Activated CD4-positive, alpha-beta T cell treated with anti-CD3 and anti-CD28 coated beads, Interleukin-2, amount 10 ng/mL, durations not matched to agents 24 days and 14 days (primary cell): ENCODE measurements at regions of chr1 and their contacts with region 1.

Region 1: GRCh38 chr1:167803358-167804207 is 81.8 kb downstream of the MPZL1 start:
- DNase-seq: peak; percentile 96
- H3K4me3 Mint-ChIP-seq: peak overlapping the region; percentile 68
- H3K27ac Mint-ChIP-seq: peak overlapping the region; percentile 87
- H3K4me1 Mint-ChIP-seq: peaks cover 26% of the 10 kb centered on the region
- H3K27me3 Mint-ChIP-seq: no peaks in the 10 kb centered on the region

Region 2: GRCh38 chr1:167599957-167600581 is 203.5 kb before region 1 on chr1:
- intact Hi-C with region 1: loop called (anchors 1 kb)
- DNase-seq: peak; percentile 85
- H3K4me3 Mint-ChIP-seq: peak overlapping the region; percentile 72
- H3K27ac Mint-ChIP-seq: peak overlapping the region; percentile 85
- H3K4me1 Mint-ChIP-seq: peaks cover 40% of the 10 kb centered on the region
- H3K27me3 Mint-ChIP-seq: peaks cover 4% of the 10 kb centered on the region

Region 3: DNA sequence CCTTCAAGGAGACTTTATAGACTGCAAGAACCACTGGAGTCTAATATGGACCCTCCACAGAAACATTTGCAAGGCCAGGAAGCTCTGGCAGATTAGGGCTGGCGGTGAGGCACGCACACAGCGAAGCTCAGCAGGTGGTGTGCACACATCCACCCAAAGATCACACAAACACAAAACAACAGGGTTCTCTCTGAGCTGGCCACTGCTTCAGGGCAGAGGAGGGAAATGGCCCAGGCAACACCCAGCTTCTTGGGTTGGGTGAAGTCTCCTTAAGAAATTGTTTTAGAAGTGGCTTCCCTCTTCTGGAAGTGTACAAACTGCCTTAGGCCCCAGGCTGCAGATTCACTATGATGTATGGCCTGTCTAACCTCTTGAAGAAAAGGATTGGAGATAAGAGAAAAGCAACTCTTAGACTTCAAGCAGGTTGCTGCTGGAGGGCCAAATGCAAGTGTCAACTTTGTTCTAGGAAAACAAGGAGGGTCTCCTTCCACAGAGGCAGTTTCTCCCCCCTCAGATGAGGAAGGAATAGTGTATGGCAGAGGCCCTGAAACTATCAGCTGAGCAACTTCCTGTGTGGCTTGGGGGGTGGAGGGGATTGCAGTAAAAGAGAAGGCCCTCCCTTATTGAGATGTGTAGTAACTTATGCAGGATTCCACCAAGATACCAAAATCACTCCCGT is 171.5 kb before region 1 on chr1:
- intact Hi-C with region 1: no loop called
- DNase-seq: peak; percentile 79
- H3K4me3 Mint-ChIP-seq: peak overlapping the region; percentile 94
- H3K27ac Mint-ChIP-seq: peak overlapping the region; percentile 98
- H3K4me1 Mint-ChIP-seq: peaks cover 79% of the 10 kb centered on the region
- H3K27me3 Mint-ChIP-seq: no peaks in the 10 kb centered on the region

Region 4: DNA sequence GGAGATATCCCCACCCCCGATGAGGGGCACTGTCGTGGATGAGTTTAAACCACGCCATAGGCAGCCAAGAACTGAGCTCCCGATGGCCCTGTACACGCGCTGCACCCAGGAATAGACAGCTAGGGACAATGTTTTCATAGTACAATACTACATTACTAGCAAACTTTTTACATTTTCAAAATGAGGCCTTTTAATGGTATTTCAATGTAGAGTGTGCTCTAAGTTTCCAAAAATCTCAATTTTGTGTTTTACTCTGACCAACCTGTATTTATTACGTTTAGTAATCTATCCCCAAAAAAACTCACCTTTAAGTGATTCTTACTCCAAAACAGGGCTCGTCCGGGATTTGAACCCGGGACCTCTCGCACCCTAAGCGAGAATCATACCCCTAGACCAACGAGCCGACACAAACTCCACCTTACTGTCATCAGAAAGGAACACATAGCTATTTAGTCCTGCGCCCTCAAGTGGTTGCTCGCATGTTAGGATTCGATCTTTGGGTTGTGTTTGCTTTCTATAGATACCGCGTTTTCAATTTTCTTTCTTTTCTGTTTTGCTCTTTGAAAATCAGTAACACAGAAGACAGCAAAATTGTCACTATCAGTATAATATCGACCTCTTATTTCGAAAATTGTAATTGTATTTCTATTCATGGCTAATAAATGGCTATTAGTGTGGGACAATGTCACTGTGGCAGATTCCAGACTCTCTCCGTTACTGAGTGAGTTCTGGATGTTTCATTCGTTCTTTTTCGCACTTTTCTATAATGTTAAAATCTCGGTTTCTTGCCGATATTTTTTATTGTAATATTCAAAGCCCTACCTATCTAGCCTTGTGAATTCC is 88.2 kb before region 1 on chr1:
- intact Hi-C with region 1: loop called (anchors 1 kb)
- DNase-seq: peak; percentile 97
- H3K4me3 Mint-ChIP-seq: peak overlapping the region; percentile 96
- H3K27ac Mint-ChIP-seq: peak overlapping the region; percentile 98
- H3K4me1 Mint-ChIP-seq: peaks cover 56% of the 10 kb centered on the region
- H3K27me3 Mint-ChIP-seq: peaks cover 13% of the 10 kb centered on the region

Region 5: GRCh38 chr1:167721617-167722151 is 81.9 kb before region 1 on chr1 and contains the start of gene MPZL1:
- intact Hi-C with region 1: loop called (anchors 1 kb)
- DNase-seq: peak; percentile 99
- H3K4me3 Mint-ChIP-seq: peak within 1 kb of the TSS; percentile 96
- H3K27ac Mint-ChIP-seq: peak within 1 kb of the TSS; percentile 94
- H3K4me1 Mint-ChIP-seq: peaks cover 66% of the 10 kb centered on the region
- H3K27me3 Mint-ChIP-seq: no peaks in the 10 kb centered on the region
- total RNA-seq, gene MPZL1: 39.3 and 41.8 TPM in 2 replicates

Region 6: DNA sequence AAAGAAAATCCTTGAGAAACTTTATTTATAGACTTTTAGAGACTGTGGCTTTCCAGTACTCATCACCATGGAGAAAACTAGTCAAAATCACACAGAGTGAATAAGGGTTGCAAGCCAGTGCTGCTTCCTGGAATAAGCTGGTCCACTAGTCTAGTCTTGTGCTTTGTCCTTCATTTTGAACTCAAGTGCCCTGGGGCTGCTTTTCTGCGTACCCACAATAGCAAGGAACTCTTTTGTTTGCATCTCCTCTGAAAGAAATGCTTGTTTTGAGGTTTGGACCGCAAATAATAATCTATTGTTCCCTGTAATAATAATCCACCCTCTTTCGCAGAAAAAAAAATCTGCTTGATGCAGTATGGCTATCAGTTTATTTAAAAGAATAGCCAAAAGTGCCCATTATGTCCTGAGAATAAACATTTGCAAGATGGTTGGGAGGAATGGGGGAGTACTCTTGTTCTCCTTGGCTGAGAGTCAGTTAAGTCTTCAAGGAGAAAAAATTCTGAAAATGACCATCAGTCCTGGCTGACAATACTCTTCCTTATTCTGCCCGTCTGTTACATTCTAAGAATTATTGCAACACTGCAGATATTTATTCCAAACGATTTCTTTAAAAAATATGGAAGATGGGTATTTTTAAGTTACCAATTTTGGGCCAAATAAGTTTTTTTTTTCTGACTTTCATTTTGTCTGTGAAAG is 39.9 kb before region 1 on chr1:
- intact Hi-C with region 1: loop called (anchors 5 kb)
- DNase-seq: no peak
- H3K4me3 Mint-ChIP-seq: no peak overlapping the region
- H3K27ac Mint-ChIP-seq: no peak overlapping the region
- H3K4me1 Mint-ChIP-seq: peaks cover 34% of the 10 kb centered on the region
- H3K27me3 Mint-ChIP-seq: no peaks in the 10 kb centered on the region

Region 7: GRCh38 chr1:167776151-167776550 is 27.4 kb before region 1 on chr1:
- intact Hi-C with region 1: loop called (anchors 1 kb)
- DNase-seq: peak; percentile 41
- H3K4me3 Mint-ChIP-seq: no peak overlapping the region
- H3K27ac Mint-ChIP-seq: peak overlapping the region; percentile 23
- H3K4me1 Mint-ChIP-seq: peaks cover 31% of the 10 kb centered on the region
- H3K27me3 Mint-ChIP-seq: no peaks in the 10 kb centered on the region

Region 8: DNA sequence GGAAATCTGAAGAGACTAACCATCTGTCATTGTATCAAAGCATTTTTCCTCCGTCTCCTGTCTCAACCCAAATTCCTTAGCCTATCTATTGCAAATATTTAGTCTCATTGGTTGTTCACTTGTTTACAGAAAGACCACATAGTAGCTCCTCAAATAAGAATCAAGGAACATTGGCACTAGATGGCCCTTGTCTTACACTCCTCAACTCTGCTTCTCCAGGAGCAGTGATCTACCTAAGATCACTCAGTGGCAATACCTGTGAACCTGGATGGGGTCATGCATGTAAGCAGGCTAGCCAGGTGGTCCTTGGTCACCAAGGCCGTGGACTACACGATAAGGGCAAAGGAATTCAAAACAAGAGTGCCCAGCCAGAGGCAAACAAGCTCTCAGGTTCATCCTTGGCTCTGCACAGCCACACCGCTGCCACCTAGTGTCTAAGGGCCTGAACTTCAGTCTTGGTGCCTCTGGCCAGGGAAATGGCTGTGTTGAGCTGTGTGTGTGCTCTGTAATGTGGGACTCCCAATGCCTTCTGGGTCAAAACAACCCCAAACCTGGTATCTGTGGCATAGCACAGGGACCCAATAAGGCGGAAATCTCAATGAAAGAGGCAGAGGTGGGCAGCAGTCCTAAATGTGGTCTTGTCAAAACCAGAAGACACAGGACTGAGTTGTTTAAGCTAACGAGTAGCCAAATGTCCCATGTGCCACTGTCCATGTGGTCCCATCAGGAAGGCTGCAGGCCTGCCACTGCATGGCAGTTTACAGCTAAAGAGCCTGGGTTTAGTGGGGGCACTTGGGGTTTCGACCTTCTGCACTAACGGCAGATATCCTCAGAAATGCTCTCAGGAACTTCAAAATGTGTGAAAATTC is 278.7 kb after region 1 on chr1:
- intact Hi-C with region 1: loop called (anchors 2 kb)
- DNase-seq: peak; percentile 91
- H3K4me3 Mint-ChIP-seq: no peak overlapping the region
- H3K27ac Mint-ChIP-seq: no peak overlapping the region
- H3K4me1 Mint-ChIP-seq: peaks cover 3% of the 10 kb centered on the region
- H3K27me3 Mint-ChIP-seq: no peaks in the 10 kb centered on the region